AG04450 (cell line): ENCODE measurements at regions of chr3 and their contacts with region 1.

Region 1: DNA sequence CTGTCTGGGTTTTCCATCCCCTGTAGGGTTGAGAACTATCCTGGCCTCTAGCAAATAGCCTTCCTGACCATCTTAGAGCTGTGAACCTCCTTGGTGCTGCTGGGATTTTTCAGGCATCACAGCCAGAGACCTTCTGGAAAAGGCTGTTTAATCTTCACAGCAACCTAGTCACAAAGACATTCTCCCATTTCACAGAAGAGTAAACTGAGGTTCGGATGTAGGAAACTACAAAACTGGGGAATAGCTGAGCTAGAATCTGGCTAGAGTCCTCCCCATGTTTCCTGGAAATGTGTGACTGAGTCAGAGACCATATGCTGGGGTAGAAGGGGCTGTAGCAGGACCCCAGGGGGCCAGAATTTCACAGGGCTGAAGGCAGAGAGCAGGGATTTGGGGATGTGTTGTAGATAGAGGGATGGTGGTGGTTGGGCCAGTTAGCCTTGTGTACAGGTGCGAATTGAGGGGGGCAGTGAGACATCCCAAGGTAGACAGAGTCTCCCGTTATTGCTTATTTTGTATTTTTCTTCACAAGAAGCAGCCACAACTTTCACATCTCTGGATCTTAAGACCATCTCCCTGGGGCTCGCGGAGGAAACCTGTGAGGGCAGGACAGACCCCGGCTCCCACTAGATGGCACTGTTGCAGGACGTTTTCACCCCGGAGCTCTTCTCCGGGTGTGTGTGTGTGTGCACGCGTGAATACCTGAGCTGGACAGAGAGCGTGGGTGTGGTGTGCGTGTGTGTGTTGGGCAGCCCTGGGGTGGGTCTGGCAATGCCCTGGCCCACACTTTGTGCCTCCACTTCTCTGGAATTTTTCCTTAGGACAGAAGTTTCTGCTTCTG is 66.9 kb upstream of the PRR23C start:
- DNase-seq: peak; percentile 41
- H3K4me3 ChIP-seq: no peak overlapping the region
- H3K27ac ChIP-seq: no peak overlapping the region
- H3K27me3 ChIP-seq: peaks cover 25% of the 10 kb centered on the region
- CTCF ChIP-seq: peak; percentile 92

Region 2: DNA sequence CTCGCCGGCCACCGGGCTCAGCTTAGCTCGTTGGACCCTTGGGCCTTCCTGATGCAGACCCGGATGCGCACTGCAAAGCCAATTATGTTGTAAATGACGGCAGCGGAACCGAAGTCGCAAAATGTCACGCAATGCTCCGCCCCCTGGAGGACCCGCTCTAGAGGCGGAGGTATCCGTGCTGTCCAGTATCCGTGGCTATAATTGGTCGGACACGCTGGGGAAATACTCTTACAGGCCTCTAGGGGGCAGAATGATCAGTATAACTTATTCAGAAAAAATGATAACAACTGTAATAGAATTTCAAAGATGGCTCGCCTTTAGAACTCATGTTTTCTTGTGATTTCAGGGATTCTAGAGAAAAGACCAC is 90.8 kb before region 1 on chr3 and contains the start of gene PRR23B:
- CTCF ChIA-PET with region 1: no interaction called
- POLR2A ChIA-PET with region 1: no interaction called
- DNase-seq: no peak
- H3K4me3 ChIP-seq: no peak within 1 kb of the TSS
- H3K27ac ChIP-seq: no peak within 1 kb of the TSS
- H3K27me3 ChIP-seq: no peaks in the 10 kb centered on the region
- CTCF ChIP-seq: no peak
- polyA plus RNA-seq, gene PRR23B: not detected in 2 replicates

Region 3: DNA sequence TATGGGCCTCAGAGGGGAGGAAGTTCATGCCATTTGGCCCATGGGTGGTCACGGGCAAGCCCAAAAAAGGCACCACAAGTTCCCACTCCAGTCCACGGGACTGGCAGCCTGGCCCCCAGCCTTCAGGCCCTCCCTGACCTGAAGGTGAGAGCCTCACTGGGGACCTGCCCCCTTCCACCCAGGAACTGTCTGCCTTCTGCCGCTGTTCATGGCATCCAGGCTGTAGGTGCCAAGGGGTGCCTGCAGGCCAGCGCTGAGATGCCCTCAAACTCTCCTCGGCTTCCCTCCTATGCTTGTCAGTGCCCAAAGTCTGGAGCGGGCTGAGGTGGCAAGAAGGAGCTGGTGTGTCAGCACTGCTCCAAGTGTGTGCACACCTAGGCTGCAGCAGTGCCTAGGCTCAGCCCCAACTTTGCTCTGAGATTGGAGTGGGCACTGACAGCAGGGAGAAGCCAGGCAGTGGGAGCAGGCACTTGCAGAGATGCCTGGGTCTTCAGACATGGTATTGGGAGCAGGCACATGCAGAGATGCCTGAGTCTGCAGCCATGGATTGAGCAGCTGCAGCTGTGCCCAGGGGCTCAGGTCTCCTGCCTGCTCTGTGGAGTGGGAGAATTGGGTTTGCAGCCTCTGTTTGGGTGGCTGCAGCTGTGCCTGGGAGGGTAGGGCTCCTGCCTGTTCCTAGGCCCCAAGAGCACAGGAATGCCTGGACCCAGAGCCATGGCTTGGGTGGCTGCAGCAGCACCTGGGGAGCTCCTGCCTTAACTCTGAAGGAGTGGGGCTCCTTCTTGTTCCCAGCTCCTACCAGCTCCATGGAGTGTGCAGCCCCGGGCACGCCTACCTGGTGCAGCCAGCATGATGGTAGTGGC is 22.9 kb before region 1 on chr3:
- CTCF ChIA-PET with region 1: interaction called, 11 read pairs
- POLR2A ChIA-PET with region 1: no interaction called
- DNase-seq: no peak
- H3K4me3 ChIP-seq: no peak overlapping the region
- H3K27ac ChIP-seq: no peak overlapping the region
- H3K27me3 ChIP-seq: peaks cover 3% of the 10 kb centered on the region
- CTCF ChIP-seq: no peak

Region 4: DNA sequence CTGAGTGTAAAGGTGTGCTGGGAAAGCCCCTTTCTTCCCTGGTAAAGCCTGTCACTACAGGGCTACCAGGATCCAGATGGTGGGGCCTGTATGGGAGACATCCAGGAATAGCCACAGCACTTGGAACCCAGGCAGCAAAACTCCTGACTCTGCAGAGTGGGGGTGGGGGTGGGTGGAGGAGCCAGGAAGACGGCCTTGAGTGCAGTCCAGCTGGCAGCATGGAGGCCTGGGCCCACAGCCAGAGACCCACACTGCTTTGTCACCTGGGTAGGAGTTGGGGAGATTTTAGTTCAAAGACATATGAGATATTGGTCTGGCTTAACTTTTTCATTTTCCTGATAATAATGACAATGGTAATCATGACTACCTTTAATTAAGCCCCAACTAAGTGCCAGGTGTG is 115.6 kb after region 1 on chr3:
- CTCF ChIA-PET with region 1: no interaction called
- POLR2A ChIA-PET with region 1: no interaction called
- DNase-seq: no peak
- H3K4me3 ChIP-seq: no peak overlapping the region
- H3K27ac ChIP-seq: no peak overlapping the region
- H3K27me3 ChIP-seq: peaks cover 5% of the 10 kb centered on the region
- CTCF ChIP-seq: no peak

Region 5: GRCh38 chr3:139302084-139302800 is 190.6 kb after region 1 on chr3:
- CTCF ChIA-PET with region 1: interaction called, 33 read pairs
- POLR2A ChIA-PET with region 1: no interaction called
- DNase-seq: peak; percentile 97
- H3K4me3 ChIP-seq: no peak overlapping the region
- H3K27ac ChIP-seq: peak overlapping the region; percentile 89
- H3K27me3 ChIP-seq: no peaks in the 10 kb centered on the region
- CTCF ChIP-seq: no peak

Region 6: GRCh38 chr3:139319428-139320402 is 208.1 kb after region 1 on chr3:
- CTCF ChIA-PET with region 1: interaction called, 19 read pairs
- POLR2A ChIA-PET with region 1: no interaction called
- DNase-seq: no peak
- H3K4me3 ChIP-seq: no peak overlapping the region
- H3K27ac ChIP-seq: no peak overlapping the region
- H3K27me3 ChIP-seq: peaks cover 5% of the 10 kb centered on the region
- CTCF ChIP-seq: peak; percentile 43

Region 7: GRCh38 chr3:139343895-139344856 is 232.6 kb after region 1 on chr3 and contains the start of gene MRPS22:
- CTCF ChIA-PET with region 1: interaction called, 26 read pairs
- POLR2A ChIA-PET with region 1: no interaction called
- DNase-seq: peak; percentile 74
- H3K4me3 ChIP-seq: peak within 1 kb of the TSS; percentile 88
- H3K27ac ChIP-seq: peak within 1 kb of the TSS; percentile 83
- H3K27me3 ChIP-seq: no peaks in the 10 kb centered on the region
- CTCF ChIP-seq: no peak
- polyA plus RNA-seq, gene MRPS22: 50.1 and 68.4 TPM in 2 replicates